ENCODE measurements at regions of chr1 and their contacts with region 1.

Region 1: DNA sequence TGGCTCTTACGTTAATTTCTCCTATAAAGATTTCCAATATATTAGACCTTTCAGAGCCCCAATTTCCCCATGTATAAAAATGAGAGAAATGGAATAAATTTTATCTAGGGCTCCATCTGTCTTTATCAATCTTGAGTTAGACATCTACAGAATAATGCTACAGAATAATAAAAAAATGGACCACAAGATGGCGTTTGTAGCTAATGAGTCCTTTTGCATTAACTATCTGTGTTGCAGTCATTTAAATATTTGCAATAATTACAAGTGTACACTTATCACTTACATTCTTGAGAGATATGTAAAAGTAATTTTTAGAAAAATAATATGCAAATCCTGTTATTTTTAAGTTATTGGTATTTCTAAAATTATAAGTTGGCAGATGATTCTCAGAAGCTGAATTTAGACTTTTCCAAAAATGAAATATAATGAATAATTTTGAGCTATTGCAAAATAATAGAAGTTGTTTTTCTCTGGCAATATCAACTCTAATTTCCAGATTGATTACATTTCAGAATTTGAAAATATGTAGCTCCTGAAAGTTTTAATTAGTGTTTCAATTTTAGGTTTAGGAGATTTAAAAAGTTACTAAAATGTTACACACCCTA is 87.7 kb downstream of the SNX7 start:
- DNase-seq: no peak
- H3K4me3 ChIP-seq: no peak overlapping the region
- H3K27ac ChIP-seq: no peak overlapping the region
- H3K4me1 ChIP-seq: no peaks in the 10 kb centered on the region
- H3K27me3 ChIP-seq: no peaks in the 10 kb centered on the region
- CTCF ChIP-seq: peak; percentile 49

Region 2: DNA sequence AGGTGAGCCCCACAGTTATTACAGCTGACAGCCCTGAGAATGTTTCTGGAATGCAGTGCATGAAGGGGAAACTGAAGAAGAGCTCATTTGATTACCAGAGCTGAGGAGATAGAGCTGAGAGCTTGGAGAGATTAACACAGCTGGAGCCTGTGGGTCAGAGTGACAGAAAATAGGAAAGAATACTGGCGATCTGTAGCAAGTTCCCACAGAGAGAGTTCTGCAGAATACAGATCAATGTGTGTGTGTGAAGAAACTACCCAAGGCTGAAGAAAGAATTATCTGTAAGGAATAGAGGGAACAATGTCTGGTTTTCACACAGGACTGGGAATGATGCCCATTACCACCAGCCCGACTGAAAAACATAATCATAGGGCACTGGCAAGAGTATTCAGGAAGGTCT is 191.4 kb before region 1 on chr1:
- intact Hi-C with region 1: no loop called
- DNase-seq: no peak
- H3K4me3 ChIP-seq: no peak overlapping the region
- H3K27ac ChIP-seq: no peak overlapping the region
- H3K4me1 ChIP-seq: no peaks in the 10 kb centered on the region
- H3K27me3 ChIP-seq: peaks cover 2% of the 10 kb centered on the region
- CTCF ChIP-seq: no peak

Region 3: DNA sequence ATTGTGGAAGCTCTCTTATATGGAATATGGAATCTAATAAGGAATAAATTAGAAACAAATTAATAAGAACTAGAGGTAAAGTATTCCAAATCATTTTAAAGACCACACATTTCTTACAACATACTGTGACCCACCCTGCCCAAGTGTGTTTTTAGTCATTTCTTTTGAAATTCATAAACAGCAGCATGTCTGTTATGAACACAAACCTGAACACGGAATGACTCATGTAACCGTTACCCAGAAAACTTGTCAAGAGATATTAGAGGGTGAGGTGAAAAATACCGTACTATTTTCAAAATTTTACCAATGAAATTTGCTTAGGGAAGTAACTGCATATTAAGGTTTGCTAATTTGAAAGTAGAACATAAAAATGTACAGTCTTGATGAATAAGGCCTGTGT is 39.3 kb before region 1 on chr1:
- intact Hi-C with region 1: loop called (anchors 2 kb)
- DNase-seq: no peak
- H3K4me3 ChIP-seq: no peak overlapping the region
- H3K27ac ChIP-seq: no peak overlapping the region
- H3K4me1 ChIP-seq: no peaks in the 10 kb centered on the region
- H3K27me3 ChIP-seq: no peaks in the 10 kb centered on the region
- CTCF ChIP-seq: no peak